ENCODE measurements at regions of chr10 and their contacts with region 1.

Region 1: DNA sequence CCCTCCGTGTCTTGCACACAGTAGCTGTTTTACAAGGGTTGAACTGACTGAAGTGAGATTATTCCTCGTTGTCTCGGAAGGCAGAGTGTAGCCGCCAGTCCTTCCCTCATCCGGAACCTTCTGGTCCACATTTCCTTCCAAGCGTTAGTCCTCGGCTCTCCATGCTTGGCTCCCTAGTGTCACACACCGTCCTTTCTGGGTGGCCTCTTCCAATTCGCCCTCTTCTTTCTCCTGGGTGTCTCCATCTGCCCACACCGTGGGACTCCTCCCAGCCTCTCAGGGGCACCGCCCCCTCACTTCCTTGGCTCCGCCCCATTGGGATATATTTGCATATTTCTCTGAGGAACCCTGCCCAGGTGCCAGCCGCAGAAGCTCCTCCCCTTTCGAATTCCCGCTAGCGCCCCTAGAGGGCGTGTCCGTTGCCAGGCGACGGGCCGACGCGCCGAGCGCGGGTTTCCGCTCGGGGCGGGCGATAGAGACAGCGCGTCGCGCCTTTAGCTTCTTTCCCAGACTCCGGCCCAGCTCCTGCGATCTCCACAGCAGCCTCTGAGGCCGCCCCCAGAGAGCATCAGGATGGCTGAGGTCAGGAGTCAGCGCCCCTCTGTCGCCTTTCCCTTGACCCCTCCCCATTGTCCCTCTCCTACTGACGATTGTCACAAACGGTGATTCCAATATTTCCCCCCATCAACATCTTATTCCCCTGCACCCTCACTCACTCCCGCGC is at the start of gene CFAP58:
- DNase-seq: peak; percentile 94
- H3K4me3 Mint-ChIP-seq: peak within 1 kb of the TSS; percentile 5
- H3K27ac Mint-ChIP-seq: peak within 1 kb of the TSS; percentile 8
- H3K4me1 Mint-ChIP-seq: no peaks in the 10 kb centered on the region
- H3K27me3 Mint-ChIP-seq: no peaks in the 10 kb centered on the region
- total RNA-seq, gene CFAP58: 0.59 to 0.86 TPM

Region 2: GRCh38 chr10:103918053-103918846 is 435.2 kb before region 1 on chr10 and contains the start of gene STN1:
- CTCF ChIA-PET with region 1: no interaction called
- intact Hi-C with region 1: loop called (anchors 5 kb)
- DNase-seq: peak; percentile 98
- H3K4me3 Mint-ChIP-seq: peak within 1 kb of the TSS; percentile 89
- H3K27ac Mint-ChIP-seq: peak within 1 kb of the TSS; percentile 94
- H3K4me1 Mint-ChIP-seq: peaks cover 29% of the 10 kb centered on the region
- H3K27me3 Mint-ChIP-seq: no peaks in the 10 kb centered on the region
- total RNA-seq, gene STN1: 53.3 to 54.8 TPM

Region 3: GRCh38 chr10:104291439-104291951 is 62.0 kb before region 1 on chr10:
- CTCF ChIA-PET with region 1: interaction called, 173 read pairs
- intact Hi-C with region 1: loop called (anchors 1 kb)
- DNase-seq: peak; percentile 93
- H3K4me3 Mint-ChIP-seq: peak overlapping the region; percentile 10
- H3K27ac Mint-ChIP-seq: no peak overlapping the region
- H3K4me1 Mint-ChIP-seq: peaks cover 19% of the 10 kb centered on the region
- H3K27me3 Mint-ChIP-seq: peaks cover 3% of the 10 kb centered on the region

Region 4: DNA sequence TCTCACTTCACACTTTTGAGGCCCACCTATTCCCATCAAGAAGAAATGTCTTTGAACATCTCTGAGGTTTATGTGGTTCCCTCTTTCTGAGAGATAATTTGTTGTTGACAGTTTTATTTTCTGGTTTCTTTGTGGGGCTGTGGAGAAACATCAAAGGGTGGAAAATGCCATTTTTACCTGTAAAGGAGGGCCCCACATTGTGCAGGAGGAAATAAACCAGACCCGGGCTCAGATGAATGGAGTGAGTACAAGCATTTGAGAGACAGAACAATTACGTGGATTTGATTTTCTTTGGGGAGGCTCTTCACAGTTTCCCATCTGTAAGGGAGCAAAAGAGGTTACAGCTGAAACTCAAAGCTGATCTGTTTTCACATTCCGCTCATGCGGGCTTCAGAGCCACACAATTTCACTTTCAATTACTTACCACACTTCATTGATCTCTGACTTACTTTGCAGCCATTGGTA is 45.0 kb before region 1 on chr10:
- CTCF ChIA-PET with region 1: interaction called, 177 read pairs
- intact Hi-C with region 1: loop called (anchors 1 kb)
- DNase-seq: peak; percentile 58
- H3K4me3 Mint-ChIP-seq: peak overlapping the region; percentile 17
- H3K27ac Mint-ChIP-seq: peak overlapping the region; percentile 89
- H3K4me1 Mint-ChIP-seq: peaks cover 60% of the 10 kb centered on the region
- H3K27me3 Mint-ChIP-seq: peaks cover 3% of the 10 kb centered on the region

Region 5: GRCh38 chr10:104328896-104329710 is 24.4 kb before region 1 on chr10:
- CTCF ChIA-PET with region 1: interaction called, 25 read pairs
- intact Hi-C with region 1: loop called (anchors 1 kb)
- DNase-seq: peak; percentile 94
- H3K4me3 Mint-ChIP-seq: peak overlapping the region; percentile 72
- H3K27ac Mint-ChIP-seq: peak overlapping the region; percentile 96
- H3K4me1 Mint-ChIP-seq: peaks cover 98% of the 10 kb centered on the region
- H3K27me3 Mint-ChIP-seq: no peaks in the 10 kb centered on the region

Region 6: GRCh38 chr10:104614245-104614831 is 260.9 kb after region 1 on chr10:
- CTCF ChIA-PET with region 1: interaction called, 3 read pairs
- intact Hi-C with region 1: loop called (anchors 5 kb)
- DNase-seq: peak; percentile 55
- H3K4me3 Mint-ChIP-seq: no peak overlapping the region
- H3K27ac Mint-ChIP-seq: no peak overlapping the region
- H3K4me1 Mint-ChIP-seq: no peaks in the 10 kb centered on the region
- H3K27me3 Mint-ChIP-seq: no peaks in the 10 kb centered on the region

Region 7: GRCh38 chr10:105538874-105539273 is 1185.4 kb after region 1 on chr10:
- CTCF ChIA-PET with region 1: no interaction called
- intact Hi-C with region 1: no loop called
- DNase-seq: no peak
- H3K4me3 Mint-ChIP-seq: no peak overlapping the region
- H3K27ac Mint-ChIP-seq: no peak overlapping the region
- H3K4me1 Mint-ChIP-seq: no peaks in the 10 kb centered on the region
- H3K27me3 Mint-ChIP-seq: no peaks in the 10 kb centered on the region

Measured in activated naive CD4-positive, alpha-beta T cell treated with anti-CD3 and anti-CD28 coated beads for 36 hours (primary cell).